Dorsolateral prefrontal cortex (tissue), 120 donors: ENCODE measurements at regions of chr14 and their contacts with region 1.

Region 1: GRCh38 chr14:100306420-100307219 is at the start of gene SLC25A29:
- DNase-seq: peak; percentile 84 to 97 (median 91)
- H3K4me3 ChIP-seq: peak within 1 kb of the TSS; percentile 73 to 99 (median 93)
- H3K27ac ChIP-seq: peak within 1 kb of the TSS; percentile 25 to 98 (median 88)
- H3K27me3 ChIP-seq: no peaks in the 10 kb centered on the region
- CTCF ChIP-seq: peak in 21 of 56 donors; percentile 4 to 59 (median 16)
- total RNA-seq, gene SLC25A29: 58.8 to 204 (median 102) TPM

Region 2: GRCh38 chr14:100192672-100193416 is 113.8 kb before region 1 on chr14:
- intact Hi-C with region 1: no loop called
- DNase-seq: peak; percentile 97 to 100 (median 98)
- H3K4me3 ChIP-seq: peak overlapping the region; percentile 46 to 77 (median 64)
- H3K27ac ChIP-seq: peak overlapping the region; percentile 80 to 99 (median 92)
- H3K27me3 ChIP-seq: no peaks in the 10 kb centered on the region
- CTCF ChIP-seq: peak; percentile 75 to 100 (median 97)

Region 3: GRCh38 chr14:100341301-100342031 is 34.8 kb after region 1 on chr14:
- intact Hi-C with region 1: loop called in 1 of 2 experiments (anchors 1 kb)
- DNase-seq: peak in 4 of 10 donors; percentile 15 to 33 (median 32)
- H3K4me3 ChIP-seq: no peak overlapping the region
- H3K27ac ChIP-seq: peak overlapping the region in 55 of 59 donors; percentile 1 to 86 (median 65)
- H3K27me3 ChIP-seq: no peaks in the 10 kb centered on the region
- CTCF ChIP-seq: no peak